CD4-positive, alpha-beta memory T cell (primary cell): ENCODE measurements at regions of chr17 and their contacts with region 1.

Region 1: DNA sequence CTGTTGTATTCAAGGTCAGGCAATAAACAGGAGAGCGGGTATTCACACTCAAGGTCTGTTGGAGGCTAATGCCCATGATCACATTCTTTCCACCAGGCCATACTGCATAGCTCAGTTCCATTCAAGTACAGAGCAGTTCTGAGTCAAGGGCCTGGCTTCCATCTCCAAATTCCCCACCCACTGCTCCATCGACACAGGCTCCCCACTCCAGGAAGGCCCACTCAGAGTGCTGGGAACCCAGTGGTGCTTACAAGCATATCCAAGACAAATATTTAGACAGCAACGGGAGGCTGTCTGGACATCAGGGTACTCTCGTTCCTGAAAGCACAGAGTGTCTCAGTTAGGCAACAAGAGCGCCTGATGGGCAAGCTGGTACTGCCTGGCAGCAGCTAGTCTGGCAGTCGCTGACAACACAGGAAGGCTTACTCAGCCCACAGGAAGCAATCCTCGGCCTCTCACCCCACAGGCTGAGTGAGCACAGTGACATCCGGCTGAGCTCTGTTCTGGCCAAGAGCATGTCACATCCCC is 40.9 kb downstream of the RFFL start:
- DNase-seq: peak; percentile 59 to 84 (median 62)
- H3K4me3 ChIP-seq: no peak overlapping the region
- H3K4me3 Mint-ChIP-seq: peak overlapping the region; percentile 57 to 76 (median 66)
- H3K27ac ChIP-seq: peak overlapping the region; percentile 66
- H3K27ac Mint-ChIP-seq: peak overlapping the region; percentile 92 to 98 (median 96)
- H3K4me1 ChIP-seq: peaks cover 42% of the 10 kb centered on the region
- H3K4me1 Mint-ChIP-seq: peaks cover 45 to 70% (median 58%) of the 10 kb centered on the region in 4 donors
- H3K27me3 ChIP-seq: no peaks in the 10 kb centered on the region
- H3K27me3 Mint-ChIP-seq: no peaks in the 10 kb centered on the region

Region 2: DNA sequence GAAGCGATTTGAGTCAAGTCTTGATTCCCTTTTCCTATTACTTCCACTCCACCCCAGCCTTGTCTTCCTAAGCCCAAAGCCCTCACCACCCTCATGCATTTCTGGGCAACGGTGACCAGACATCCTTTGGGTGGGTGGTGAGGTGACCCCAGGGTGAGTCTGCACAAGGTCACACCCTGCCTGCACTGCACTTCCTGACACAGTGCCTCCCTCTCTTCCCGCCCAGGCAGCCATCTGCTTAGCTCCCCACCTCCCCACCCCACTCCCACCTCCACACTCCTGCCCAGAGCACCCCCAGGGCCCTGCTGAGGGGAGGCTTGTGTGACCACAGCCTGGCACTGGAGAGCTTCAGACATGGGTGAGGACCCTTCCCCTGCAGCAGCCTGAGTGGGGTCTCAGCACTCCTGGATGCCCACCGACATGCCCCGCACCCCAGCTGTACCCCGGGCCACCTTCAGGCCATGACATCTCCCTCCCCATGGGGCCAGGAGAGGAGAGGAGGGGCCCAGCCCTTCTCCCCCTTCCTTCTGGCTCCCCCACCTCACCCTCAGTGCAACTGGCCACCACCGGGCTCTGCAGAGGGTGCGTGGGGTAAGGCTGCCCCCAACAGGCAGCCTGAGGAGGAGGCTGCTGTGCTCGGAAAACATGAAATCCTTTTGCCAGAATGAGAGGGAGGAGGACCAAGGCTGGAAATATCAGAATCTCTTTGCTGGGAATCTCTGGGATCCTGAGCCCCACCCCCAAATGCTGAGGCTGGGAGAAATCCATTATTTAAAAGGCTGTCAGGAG is 129.9 kb before region 1 on chr17:
- CTCF ChIA-PET with region 1: no interaction called
- POLR2A ChIA-PET with region 1: no interaction called
- intact Hi-C with region 1: no loop called
- DNase-seq: peak in 4 of 5 donors; percentile 18 to 26 (median 22)
- H3K4me3 ChIP-seq: no peak overlapping the region
- H3K4me3 Mint-ChIP-seq: no peak overlapping the region
- H3K27ac ChIP-seq: no peak overlapping the region
- H3K27ac Mint-ChIP-seq: no peak overlapping the region
- H3K4me1 ChIP-seq: no peaks in the 10 kb centered on the region
- H3K4me1 Mint-ChIP-seq: no peaks in the 10 kb centered on the region
- H3K27me3 ChIP-seq: no peaks in the 10 kb centered on the region
- H3K27me3 Mint-ChIP-seq: peaks cover 23 to 38% of the 10 kb centered on the region in 2 donors

Region 3: DNA sequence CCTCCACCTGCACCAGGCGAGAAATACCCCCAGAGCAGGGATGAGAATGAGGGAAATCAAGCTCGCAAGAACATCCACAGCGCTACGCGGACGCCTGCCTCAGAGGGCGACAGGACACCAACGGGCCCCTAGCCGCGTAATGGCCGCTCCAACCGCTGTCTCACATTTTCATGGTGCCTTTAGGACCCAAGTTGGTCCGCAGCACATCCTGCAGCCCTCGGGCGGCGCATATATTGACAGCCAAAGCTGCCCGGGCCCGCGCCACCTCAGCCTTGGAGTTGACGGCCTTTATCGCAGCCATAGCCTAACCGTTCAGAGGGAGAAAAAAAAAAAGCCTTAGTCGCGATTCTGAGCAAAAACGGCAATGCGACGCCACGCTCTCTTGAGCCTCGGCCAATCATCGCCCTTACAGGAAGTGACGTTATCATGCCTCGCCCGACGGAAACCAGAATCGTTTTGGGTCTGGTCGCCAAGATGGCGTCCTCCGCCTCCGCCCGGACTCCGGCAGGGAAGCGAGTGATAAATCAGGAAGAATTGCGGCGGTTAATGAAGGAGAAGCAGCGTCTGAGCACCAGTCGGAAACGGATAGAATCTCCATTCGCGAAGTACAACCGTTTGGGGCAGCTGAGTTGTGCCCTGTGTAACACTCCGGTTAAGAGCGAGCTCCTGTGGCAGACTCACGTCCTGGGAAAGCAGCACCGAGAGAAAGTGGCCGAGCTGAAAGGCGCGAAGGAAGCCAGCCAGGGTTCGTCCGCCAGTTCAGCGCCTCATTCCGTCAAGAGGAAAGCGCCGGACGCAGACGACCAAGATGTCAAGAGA is 61.3 kb before region 1 on chr17 and contains the starts of genes CCT6B and ZNF830:
- CTCF ChIA-PET with region 1: no interaction called
- POLR2A ChIA-PET with region 1: interaction called, 12 read pairs
- intact Hi-C with region 1: no loop called
- DNase-seq: peak; percentile 90 to 95 (median 92)
- H3K4me3 ChIP-seq: peak within 1 kb of the TSS; percentile 82 to 84
- H3K4me3 Mint-ChIP-seq: peak within 1 kb of the TSS; percentile 100
- H3K27ac ChIP-seq: peak within 1 kb of the TSS; percentile 86
- H3K27ac Mint-ChIP-seq: peak within 1 kb of the TSS; percentile 97 to 100 (median 100)
- H3K4me1 ChIP-seq: peaks cover 20% of the 10 kb centered on the region
- H3K4me1 Mint-ChIP-seq: peaks cover 17 to 38% (median 27%) of the 10 kb centered on the region in 4 donors
- H3K27me3 ChIP-seq: no peaks in the 10 kb centered on the region
- H3K27me3 Mint-ChIP-seq: peaks cover 0 to 4% of the 10 kb centered on the region in 2 donors
- total RNA-seq, gene CCT6B: 2.0 to 2.1 TPM
- total RNA-seq, gene ZNF830: 41.0 to 44.0 TPM

Region 4: GRCh38 chr17:35010093-35010492 is 12.5 kb before region 1 on chr17:
- CTCF ChIA-PET with region 1: interaction called, 7 read pairs
- POLR2A ChIA-PET with region 1: interaction called, 17 read pairs
- intact Hi-C with region 1: no loop called
- DNase-seq: no peak
- H3K4me3 ChIP-seq: no peak overlapping the region
- H3K4me3 Mint-ChIP-seq: no peak overlapping the region
- H3K27ac ChIP-seq: no peak overlapping the region
- H3K27ac Mint-ChIP-seq: peak overlapping the region in 3 of 7 donors; percentile 18 to 60 (median 59)
- H3K4me1 ChIP-seq: no peaks in the 10 kb centered on the region
- H3K4me1 Mint-ChIP-seq: peaks cover 0 to 2% (median 0%) of the 10 kb centered on the region in 4 donors
- H3K27me3 ChIP-seq: no peaks in the 10 kb centered on the region
- H3K27me3 Mint-ChIP-seq: no peaks in the 10 kb centered on the region

Region 5: GRCh38 chr17:35046740-35047283 is 24.2 kb after region 1 on chr17:
- CTCF ChIA-PET with region 1: interaction called, 20 read pairs
- POLR2A ChIA-PET with region 1: interaction called, 107 read pairs
- intact Hi-C with region 1: loop called (anchors 1 kb)
- DNase-seq: peak; percentile 71 to 89 (median 73)
- H3K4me3 ChIP-seq: peak overlapping the region; percentile 26 to 35
- H3K4me3 Mint-ChIP-seq: peak overlapping the region; percentile 74 to 87 (median 86)
- H3K27ac ChIP-seq: peak overlapping the region; percentile 68
- H3K27ac Mint-ChIP-seq: peak overlapping the region; percentile 83 to 96 (median 92)
- H3K4me1 ChIP-seq: peaks cover 94% of the 10 kb centered on the region
- H3K4me1 Mint-ChIP-seq: peaks cover 55 to 82% (median 68%) of the 10 kb centered on the region in 4 donors
- H3K27me3 ChIP-seq: no peaks in the 10 kb centered on the region
- H3K27me3 Mint-ChIP-seq: no peaks in the 10 kb centered on the region

Region 6: DNA sequence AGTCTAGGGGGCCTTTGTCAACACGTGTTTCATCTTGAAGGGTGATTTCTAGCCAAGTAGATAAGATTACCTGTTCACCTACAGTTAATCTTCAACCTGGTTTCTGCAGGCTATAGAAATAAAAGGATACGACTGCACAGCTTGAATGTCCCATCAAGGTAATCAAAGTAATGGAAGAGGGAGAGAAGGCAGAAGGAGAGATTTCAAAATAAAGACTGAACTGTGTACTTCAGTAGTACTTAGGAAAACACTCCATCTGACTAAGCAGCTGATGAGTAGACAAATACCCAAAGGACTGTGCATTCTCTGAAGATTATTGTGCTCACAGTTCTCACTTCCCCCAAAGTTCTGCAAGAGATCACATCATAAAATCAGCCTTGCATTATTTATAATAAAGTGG is 46.7 kb after region 1 on chr17:
- CTCF ChIA-PET with region 1: interaction called, 79 read pairs
- POLR2A ChIA-PET with region 1: interaction called, 63 read pairs
- intact Hi-C with region 1: no loop called
- DNase-seq: no peak
- H3K4me3 ChIP-seq: no peak overlapping the region
- H3K4me3 Mint-ChIP-seq: no peak overlapping the region
- H3K27ac ChIP-seq: no peak overlapping the region
- H3K27ac Mint-ChIP-seq: peak overlapping the region in 4 of 7 donors; percentile 1 to 61 (median 9)
- H3K4me1 ChIP-seq: peaks cover 57% of the 10 kb centered on the region
- H3K4me1 Mint-ChIP-seq: peaks cover 38 to 78% (median 60%) of the 10 kb centered on the region in 4 donors
- H3K27me3 ChIP-seq: no peaks in the 10 kb centered on the region
- H3K27me3 Mint-ChIP-seq: no peaks in the 10 kb centered on the region